Breast epithelium (tissue), 4 donors: ENCODE measurements at regions of chr1 and their contacts with region 1.

Region 1: GRCh38 chr1:223207293-223208066 is 64.4 kb upstream of the TLR5 start:
- DNase-seq: no peak
- H3K4me3 ChIP-seq: no peak overlapping the region
- H3K27ac ChIP-seq: no peak overlapping the region
- H3K4me1 ChIP-seq: no peaks in the 10 kb centered on the region
- H3K27me3 ChIP-seq: no peaks in the 10 kb centered on the region
- CTCF ChIP-seq: no peak
- POLR2A ChIP-seq: no peak

Region 2: DNA sequence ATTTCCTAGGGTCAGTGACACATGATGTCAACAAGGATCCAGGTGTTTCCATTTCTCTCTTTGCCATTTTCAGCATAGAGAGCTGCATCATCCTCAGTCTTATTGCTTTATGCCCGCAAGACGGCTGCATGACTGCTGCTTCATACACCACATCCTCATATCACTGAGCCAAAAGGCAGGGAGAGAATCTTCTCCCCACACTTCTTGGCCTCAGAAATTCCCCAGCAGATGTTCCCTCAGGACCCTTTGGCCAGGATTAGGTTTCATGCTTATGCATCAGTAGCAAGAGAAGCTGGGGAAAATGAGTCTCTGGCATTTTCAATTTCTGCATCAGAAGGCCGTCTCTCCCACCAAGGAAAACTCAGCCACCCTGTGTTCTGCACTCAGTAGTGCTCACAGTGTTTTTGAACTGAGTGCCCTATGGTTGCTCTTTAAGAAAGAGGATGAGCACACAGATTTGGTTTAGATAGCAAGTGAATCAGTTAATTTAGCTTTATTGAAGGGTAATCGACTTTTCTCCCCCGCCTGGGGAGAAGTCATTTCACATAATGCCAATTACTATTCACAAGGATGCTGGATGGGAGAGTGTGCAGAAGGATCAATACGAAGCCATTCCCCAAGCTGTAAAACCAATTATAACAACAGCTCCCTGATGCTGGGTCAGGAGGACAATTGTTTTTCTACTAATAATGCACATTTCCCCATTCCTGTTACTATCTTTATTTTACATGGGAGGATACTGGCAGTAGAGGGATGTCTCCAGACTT is 1019.7 kb before region 1 on chr1:
- intact Hi-C with region 1: loop called (anchors 5 kb)
- DNase-seq: no peak
- H3K4me3 ChIP-seq: no peak overlapping the region
- H3K27ac ChIP-seq: no peak overlapping the region
- H3K4me1 ChIP-seq: no peaks in the 10 kb centered on the region
- H3K27me3 ChIP-seq: no peaks in the 10 kb centered on the region
- CTCF ChIP-seq: no peak
- POLR2A ChIP-seq: no peak

Region 3: DNA sequence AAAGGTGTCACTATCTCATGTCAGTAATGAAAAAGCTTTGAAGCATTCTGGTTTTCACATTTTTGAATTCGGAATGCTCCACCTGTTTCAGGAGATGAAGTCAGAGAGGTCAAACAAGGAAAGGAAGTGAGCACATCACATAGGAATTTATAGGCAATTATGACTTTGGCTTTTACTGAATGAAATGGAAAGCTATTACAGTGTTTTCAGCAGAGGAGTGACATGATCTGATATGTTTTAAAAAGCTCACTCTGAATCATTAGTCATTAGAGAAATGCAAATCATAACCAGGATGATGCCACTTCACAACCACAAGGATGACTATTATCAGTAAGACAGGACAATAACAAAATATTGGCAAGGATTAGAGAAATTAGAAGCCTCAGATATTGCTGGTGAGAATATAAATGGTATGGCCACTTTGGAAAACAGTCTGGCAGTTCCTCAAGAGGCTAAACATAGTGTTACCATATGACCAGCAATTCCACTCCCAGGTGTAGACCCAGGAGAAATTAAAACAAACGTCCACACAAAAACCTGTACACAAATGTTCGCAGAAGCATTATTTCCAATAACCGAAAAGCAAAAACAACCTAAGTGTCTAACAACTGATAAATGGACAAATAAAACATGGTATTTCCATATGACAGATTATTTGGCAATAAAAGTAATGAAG is 625.2 kb before region 1 on chr1:
- intact Hi-C with region 1: no loop called
- DNase-seq: no peak
- H3K4me3 ChIP-seq: no peak overlapping the region
- H3K27ac ChIP-seq: no peak overlapping the region
- H3K4me1 ChIP-seq: no peaks in the 10 kb centered on the region
- H3K27me3 ChIP-seq: no peaks in the 10 kb centered on the region
- CTCF ChIP-seq: no peak
- POLR2A ChIP-seq: no peak